Posterior cingulate gyrus (tissue), 11 donors: ENCODE measurements at regions of chr20 and their contacts with region 1.

Region 1: DNA sequence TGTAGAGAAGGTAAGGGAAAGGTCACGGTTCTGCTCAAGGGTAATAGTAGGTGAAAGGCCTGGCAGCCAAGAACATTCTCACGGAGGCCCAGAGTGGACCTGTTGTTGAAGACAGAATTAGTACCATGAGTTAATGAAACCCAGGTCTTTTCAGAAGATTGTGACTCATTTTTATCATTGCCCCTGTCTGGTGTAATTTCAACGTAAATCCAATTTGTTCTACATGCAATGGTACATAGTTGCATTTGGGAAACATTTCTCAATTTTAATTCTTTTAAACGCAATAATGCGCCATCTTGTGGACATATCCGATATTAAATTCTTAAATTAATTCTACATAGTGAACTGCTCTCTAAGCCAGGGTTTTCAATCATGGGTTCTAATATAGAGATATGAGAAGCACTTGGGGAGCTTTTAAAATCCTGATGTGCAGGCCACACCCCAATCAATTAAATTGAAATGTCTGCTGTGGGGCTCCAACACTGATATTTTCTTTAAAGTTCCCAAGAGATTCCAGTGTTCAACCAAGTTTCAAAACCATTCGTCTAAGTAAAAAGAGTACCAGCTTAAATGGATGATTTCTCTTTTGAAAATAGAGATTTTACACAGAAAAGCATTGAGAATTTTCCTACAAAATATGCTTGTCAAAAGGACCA is 257.4 kb downstream of the PLCB1 start:
- DNase-seq: no peak

Region 2: DNA sequence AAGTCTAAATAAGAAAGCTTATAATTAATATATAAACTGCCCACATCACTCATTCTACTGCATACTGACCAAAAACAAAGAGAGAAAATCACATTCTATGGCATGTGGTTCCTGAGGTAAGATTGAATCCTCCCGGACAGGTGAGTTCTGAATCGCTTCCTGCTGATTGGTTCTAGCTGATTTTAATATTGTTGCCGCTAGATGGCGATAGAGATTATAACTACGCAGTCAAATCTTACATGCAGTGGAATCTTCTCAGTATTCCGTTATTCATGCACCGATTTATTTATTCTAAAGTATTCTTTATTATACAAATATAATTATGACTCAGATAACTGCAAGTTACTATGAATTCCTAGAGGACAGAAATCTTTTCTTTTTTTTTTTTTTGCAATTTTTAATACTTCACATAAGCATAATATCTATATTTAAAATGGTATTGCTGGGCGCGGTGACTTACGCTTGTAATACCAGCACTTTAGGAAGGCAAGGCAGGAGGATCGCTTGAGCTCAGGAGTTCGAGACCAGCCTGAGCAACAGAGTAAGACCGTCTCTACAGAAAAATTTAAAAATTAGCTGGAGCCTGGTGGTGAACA is 345.7 kb before region 1 on chr20:
- intact Hi-C with region 1: loop called (anchors 5 kb)
- DNase-seq: no peak

Region 3: DNA sequence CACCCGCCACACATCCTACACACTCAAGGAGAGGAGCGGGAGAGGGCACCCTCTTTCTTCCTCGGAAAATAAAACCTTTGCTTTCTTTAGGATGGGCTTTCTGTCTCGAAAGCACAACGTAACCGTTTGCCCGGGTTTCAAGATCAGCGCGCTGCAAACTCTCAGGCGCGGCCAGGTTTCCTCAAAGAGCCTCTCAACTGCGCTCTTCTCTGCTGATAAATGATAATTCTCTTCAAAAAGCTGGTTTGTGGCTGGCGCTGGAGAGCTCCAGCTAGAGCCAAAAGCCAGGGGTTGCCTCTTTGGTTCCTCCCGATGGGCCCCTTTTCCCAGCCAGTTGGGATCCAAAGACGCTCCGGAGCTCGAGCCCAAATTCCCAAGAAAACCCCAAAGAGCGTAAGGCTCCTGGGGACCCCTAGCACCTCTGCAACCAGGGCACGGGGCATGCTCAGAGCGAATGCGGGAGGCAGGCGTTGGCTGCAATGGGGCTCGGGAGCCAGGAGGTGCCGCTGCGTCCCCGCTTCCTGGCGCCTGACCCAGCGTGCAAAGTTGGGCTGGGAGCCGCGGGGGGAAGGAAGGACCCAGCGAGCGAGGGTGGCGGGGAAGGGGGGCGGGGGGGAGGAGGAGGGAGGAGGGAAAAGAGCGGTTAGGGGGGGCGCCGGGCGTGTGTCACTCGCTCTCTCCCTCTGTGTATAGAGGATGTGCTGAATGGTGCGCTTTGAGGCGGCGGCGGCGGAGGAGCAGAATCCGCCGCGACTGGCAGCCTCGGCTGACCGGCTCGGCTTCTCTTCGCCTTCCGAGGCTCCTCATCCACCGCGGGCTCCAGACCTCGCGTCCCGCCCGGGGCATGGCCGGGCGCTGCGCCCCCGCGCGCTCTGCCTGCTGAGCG is 257.7 kb before region 1 on chr20 and contains the start of gene PLCB1:
- intact Hi-C with region 1: loop called (anchors 1 kb)
- DNase-seq: peak; percentile 75 to 97 (median 84)

Region 4: DNA sequence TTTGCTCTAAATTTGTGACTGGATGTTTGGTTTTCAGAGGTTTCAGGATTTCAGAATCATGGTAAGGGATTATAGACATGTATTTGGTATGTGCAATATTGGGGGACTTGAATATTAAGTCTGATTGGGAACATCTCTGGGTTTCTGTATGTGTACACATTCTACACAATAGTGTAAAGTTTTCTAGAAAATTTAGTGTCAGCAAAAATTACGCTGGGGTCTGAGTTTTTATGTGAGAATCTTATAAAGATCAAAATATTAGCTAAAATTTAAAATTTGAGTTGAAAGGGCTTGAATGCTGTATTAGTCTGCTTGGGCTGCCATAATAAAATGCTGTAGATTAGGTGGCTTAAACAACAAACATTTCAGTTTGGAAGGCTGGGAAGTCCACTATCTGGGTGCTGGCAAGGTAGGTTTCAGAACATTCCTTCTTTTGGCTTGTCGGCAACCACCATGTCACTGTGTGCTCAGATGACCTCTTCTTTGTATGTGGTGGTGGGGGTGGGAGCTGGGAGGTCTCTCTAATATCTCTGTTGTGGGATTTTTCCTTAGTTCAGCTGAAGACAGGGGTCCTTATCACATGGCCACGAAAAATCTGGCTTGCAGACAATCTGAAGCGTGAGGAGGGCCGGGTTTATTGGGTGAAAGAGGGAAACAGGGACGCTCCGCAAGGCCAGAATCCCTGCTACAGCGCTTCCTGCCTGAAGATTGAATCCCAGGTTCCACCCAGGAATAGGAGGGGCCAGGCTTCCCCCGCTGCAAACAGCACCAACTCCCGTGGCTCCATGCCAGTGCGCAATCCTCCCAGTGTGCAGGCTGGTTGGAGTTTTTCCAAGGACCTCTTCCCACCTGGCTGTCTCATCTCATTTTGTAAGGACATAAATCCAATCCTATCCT is 42.3 kb after region 1 on chr20:
- intact Hi-C with region 1: no loop called
- DNase-seq: peak in 4 of 10 donors; percentile 18 to 80 (median 77)

Region 5: DNA sequence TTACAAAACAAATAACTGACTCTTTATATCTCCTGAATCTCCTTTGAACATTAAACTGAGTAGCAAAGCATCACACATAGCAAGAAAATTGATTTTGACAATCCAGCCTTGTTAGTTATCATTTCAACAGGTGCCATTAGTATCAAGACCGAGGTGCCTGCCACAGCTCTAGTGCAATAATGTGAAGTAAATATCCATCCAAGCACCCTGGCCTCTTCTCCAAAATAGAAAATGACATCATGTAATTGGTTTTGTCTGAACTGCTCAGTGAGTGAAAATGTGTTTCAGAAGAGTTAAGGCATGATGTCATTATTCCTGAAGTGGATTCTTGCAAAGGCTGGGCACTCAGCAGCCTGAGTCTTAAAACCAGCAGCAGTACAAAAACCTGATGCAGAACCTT is 84.0 kb after region 1 on chr20:
- intact Hi-C with region 1: no loop called
- DNase-seq: no peak